Aorta (tissue), 5 donors: ENCODE measurements at regions of chr20 and their contacts with region 1.

Region 1: GRCh38 chr20:63537525-63538203 is 488 bp upstream of the PTK6 start:
- DNase-seq: peak; percentile 94
- ATAC-seq: peak; percentile 90
- H3K4me3 ChIP-seq: no peak overlapping the region
- H3K27ac ChIP-seq: no peak overlapping the region
- H3K4me1 ChIP-seq: no peaks in the 10 kb centered on the region
- H3K27me3 ChIP-seq: no peaks in the 10 kb centered on the region

Region 2: GRCh38 chr20:63178889-63179686 is 358.6 kb before region 1 on chr20:
- intact Hi-C with region 1: no loop called
- DNase-seq: peak in 1 of 2 donors; percentile 59
- ATAC-seq: no peak
- H3K4me3 ChIP-seq: peak overlapping the region in 1 of 2 donors; percentile 4
- H3K27ac ChIP-seq: no peak overlapping the region
- H3K4me1 ChIP-seq: no peaks in the 10 kb centered on the region
- H3K27me3 ChIP-seq: peaks cover 0 to 2% of the 10 kb centered on the region in 2 donors

Region 3: DNA sequence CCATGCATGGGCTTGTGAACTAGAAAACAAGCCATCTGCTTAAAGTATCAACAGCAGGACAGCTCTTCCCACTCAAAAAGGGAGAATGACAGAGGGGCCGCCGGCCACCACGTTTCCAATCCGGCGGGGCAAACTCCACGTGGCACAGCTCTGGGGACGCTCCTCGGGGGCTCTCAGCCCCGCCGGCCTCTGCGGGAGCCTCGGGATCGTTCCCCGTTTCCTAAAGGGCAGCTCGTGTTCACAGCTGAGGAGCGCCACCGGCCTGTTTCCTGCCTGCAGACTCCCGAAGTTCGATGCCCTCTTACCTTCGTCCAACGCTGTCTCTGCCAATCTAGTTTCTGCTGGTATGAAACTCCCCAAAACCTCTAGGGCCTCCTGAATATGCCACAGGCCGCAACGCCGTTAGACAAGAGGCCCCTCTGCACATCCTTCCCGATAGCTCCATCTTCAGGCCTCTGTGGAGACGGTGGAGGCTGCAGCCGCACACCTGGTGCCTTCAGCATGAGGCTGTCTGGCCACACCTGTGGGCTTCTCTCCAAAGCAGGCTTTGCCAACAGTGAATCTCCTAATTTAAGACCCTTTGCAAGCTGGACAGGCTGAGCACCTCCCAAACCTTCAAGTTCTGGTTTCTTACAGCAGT is 111.7 kb before region 1 on chr20:
- intact Hi-C with region 1: no loop called
- DNase-seq: no peak
- ATAC-seq: no peak
- H3K4me3 ChIP-seq: no peak overlapping the region
- H3K27ac ChIP-seq: no peak overlapping the region
- H3K4me1 ChIP-seq: no peaks in the 10 kb centered on the region
- H3K27me3 ChIP-seq: no peaks in the 10 kb centered on the region

Region 4: DNA sequence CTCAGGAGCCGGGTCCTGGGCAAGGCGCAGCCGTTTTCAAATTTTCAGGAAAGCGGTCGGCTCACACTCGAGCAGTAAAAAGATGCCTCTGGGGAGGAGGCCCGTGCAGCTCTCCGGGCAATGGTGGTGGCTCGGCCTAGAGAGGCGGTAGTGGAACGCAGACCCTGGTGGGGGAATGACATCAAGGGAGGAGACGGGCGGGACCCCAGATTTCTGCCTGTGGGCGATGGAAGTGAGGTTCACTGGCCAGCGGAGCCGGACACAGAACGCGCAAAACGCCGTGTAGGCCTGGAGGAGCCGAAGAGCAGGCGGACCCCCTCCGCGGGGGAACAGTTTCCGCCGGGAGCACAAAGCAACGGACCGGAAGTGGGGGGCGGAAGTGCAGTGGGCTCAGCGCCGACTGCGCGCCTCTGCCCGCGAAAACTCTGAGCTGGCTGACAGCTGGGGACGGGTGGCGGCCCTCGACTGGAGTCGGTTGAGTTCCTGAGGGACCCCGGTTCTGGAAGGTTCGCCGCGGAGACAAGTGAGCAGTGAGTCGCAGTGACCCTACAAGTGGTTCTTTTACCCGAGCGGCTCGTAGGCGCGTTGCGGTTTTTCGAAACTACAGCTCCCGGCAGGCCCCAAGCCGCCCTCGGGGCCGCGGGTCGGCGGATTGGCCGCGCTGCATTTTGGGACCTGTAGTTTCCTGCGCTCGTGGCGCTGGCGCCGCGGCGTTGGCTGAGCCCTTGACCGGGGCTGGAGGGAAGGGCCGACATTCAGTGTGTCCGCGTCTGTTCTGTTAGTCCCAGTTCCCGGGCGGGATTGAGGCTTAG is 120.5 kb after region 1 on chr20 and contains the start of gene RTEL1:
- intact Hi-C with region 1: loop called in 1 of 2 experiments (anchors 10 kb)
- DNase-seq: peak; percentile 96 to 97
- ATAC-seq: peak; percentile 96
- H3K4me3 ChIP-seq: peak within 1 kb of the TSS; percentile 28 to 32
- H3K27ac ChIP-seq: peak within 1 kb of the TSS; percentile 9 to 85
- H3K4me1 ChIP-seq: no peaks in the 10 kb centered on the region
- H3K27me3 ChIP-seq: no peaks in the 10 kb centered on the region
- total RNA-seq, gene RTEL1: 35.5 to 43.0 TPM

Region 5: GRCh38 chr20:63775096-63775978 is 237.7 kb after region 1 on chr20:
- intact Hi-C with region 1: loop called in 1 of 2 experiments (anchors 10 kb)
- DNase-seq: peak in 1 of 2 donors; percentile 88
- ATAC-seq: peak; percentile 38
- H3K4me3 ChIP-seq: no peak overlapping the region
- H3K27ac ChIP-seq: no peak overlapping the region
- H3K4me1 ChIP-seq: no peaks in the 10 kb centered on the region
- H3K27me3 ChIP-seq: no peaks in the 10 kb centered on the region

Region 6: GRCh38 chr20:63864847-63865640 is 327.4 kb after region 1 on chr20 and contains the start of gene TPD52L2:
- intact Hi-C with region 1: loop called in 1 of 2 experiments (anchors 5 kb)
- DNase-seq: peak; percentile 99
- ATAC-seq: peak; percentile 95
- H3K4me3 ChIP-seq: peak within 1 kb of the TSS; percentile 22 to 63
- H3K27ac ChIP-seq: peak within 1 kb of the TSS; percentile 11 to 53
- H3K4me1 ChIP-seq: no peaks in the 10 kb centered on the region
- H3K27me3 ChIP-seq: no peaks in the 10 kb centered on the region
- total RNA-seq, gene TPD52L2: 91.2 to 110 TPM

Region 7: GRCh38 chr20:63973636-63974402 is 436.2 kb after region 1 on chr20:
- intact Hi-C with region 1: loop called (anchors 1 to 2 kb)
- DNase-seq: peak; percentile 93 to 97
- ATAC-seq: peak; percentile 95
- H3K4me3 ChIP-seq: no peak overlapping the region
- H3K27ac ChIP-seq: no peak overlapping the region
- H3K4me1 ChIP-seq: no peaks in the 10 kb centered on the region
- H3K27me3 ChIP-seq: no peaks in the 10 kb centered on the region